Endothelial cell of umbilical vein (primary cell): ENCODE measurements at regions of chr15 and their contacts with region 1.

Region 1: GRCh38 chr15:45611305-45611704 is 23.5 kb upstream of the SQOR start:
- DNase-seq: peak; percentile 33
- H3K4me3 ChIP-seq: no peak overlapping the region
- H3K27ac ChIP-seq: no peak overlapping the region
- H3K4me1 ChIP-seq: peaks cover 8% of the 10 kb centered on the region
- H3K27me3 ChIP-seq: no peaks in the 10 kb centered on the region
- CTCF ChIP-seq: peak; percentile 20 to 24
- POLR2A ChIP-seq: no peak

Region 2: GRCh38 chr15:45429974-45430792 is 181.1 kb before region 1 on chr15:
- CTCF ChIA-PET with region 1: interaction called, 42 read pairs
- POLR2A ChIA-PET with region 1: no interaction called
- dilution Hi-C with region 1: no loop called
- intact Hi-C with region 1: loop called (anchors 1 kb)
- DNase-seq: peak; percentile 50
- H3K4me3 ChIP-seq: peak overlapping the region in 2 of 3 experiments; percentile 32 to 55
- H3K27ac ChIP-seq: no peak overlapping the region
- H3K4me1 ChIP-seq: peaks cover 5% of the 10 kb centered on the region
- H3K27me3 ChIP-seq: peaks cover 2 to 14% of the 10 kb centered on the region in 2 experiments
- CTCF ChIP-seq: peak; percentile 100
- POLR2A ChIP-seq: no peak

Region 3: DNA sequence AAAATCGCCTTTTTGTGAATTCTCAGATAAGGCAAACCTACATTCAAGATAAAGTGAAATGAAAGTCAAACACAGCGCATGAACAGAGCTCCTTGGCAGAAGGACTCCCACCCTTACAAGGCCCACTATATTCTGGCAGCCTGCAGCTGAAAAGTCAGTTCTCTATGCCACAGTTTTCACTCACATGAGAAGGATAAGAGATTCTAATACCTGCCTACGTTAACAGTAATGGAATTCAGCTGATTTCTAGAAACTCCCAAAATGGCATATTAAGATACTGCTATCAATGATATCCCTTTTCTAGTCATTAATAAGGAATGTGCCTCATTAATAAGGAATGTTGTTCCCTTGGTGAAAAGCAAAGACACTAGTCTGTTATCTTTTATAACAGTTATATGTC is 115.7 kb before region 1 on chr15:
- CTCF ChIA-PET with region 1: interaction called, 15 read pairs
- POLR2A ChIA-PET with region 1: no interaction called
- dilution Hi-C with region 1: no loop called
- intact Hi-C with region 1: no loop called
- DNase-seq: no peak
- H3K4me3 ChIP-seq: no peak overlapping the region
- H3K27ac ChIP-seq: no peak overlapping the region
- H3K4me1 ChIP-seq: peaks cover 11% of the 10 kb centered on the region
- H3K27me3 ChIP-seq: no peaks in the 10 kb centered on the region
- CTCF ChIP-seq: no peak
- POLR2A ChIP-seq: no peak

Region 4: DNA sequence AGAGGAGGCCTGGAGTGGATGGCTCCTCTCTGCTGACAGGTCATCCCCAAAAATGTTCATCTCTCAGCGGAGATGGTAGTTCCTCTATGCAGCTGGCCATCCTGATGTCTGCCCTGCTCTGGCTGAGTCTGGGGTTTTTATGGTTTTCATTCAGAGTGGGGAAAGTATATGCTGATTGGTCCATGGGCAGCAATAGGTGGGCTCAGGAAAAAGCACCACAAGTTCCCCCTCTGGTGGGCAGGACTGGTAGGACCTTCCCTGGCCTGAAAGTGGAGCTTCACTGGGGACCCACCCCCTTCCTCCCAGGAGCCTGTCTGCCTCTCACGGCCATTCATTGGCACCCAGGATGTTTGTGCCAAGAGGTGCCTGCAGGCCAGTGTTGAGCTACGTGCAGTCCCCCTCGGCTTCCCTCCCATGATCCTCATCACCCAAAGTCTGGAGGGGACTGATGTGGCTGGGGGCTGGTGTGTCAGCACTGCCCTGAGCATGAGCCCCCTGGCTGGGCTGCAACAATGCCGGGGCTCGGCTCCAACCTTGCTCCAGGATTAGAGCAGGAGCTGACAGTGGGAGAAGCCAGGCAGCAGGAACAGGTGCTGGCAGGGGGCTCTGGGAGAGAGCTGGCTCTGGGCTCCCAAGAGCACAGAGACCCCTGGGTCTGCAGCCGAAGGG is 37.2 kb before region 1 on chr15:
- CTCF ChIA-PET with region 1: interaction called, 13 read pairs
- POLR2A ChIA-PET with region 1: no interaction called
- dilution Hi-C with region 1: no loop called
- intact Hi-C with region 1: no loop called
- DNase-seq: no peak
- H3K4me3 ChIP-seq: no peak overlapping the region
- H3K27ac ChIP-seq: no peak overlapping the region
- H3K4me1 ChIP-seq: no peaks in the 10 kb centered on the region
- H3K27me3 ChIP-seq: peaks cover 2 to 10% of the 10 kb centered on the region in 2 experiments
- CTCF ChIP-seq: peak; percentile 21 to 35
- POLR2A ChIP-seq: no peak

Region 5: GRCh38 chr15:45594319-45594718 is 17.0 kb before region 1 on chr15:
- CTCF ChIA-PET with region 1: interaction called, 47 read pairs
- POLR2A ChIA-PET with region 1: no interaction called
- dilution Hi-C with region 1: no loop called
- intact Hi-C with region 1: no loop called
- DNase-seq: no peak
- H3K4me3 ChIP-seq: no peak overlapping the region
- H3K27ac ChIP-seq: no peak overlapping the region
- H3K4me1 ChIP-seq: peaks cover 12% of the 10 kb centered on the region
- H3K27me3 ChIP-seq: no peaks in the 10 kb centered on the region
- CTCF ChIP-seq: no peak
- POLR2A ChIP-seq: no peak

Region 6: GRCh38 chr15:45660231-45660979 is 49.1 kb after region 1 on chr15:
- CTCF ChIA-PET with region 1: no interaction called
- POLR2A ChIA-PET with region 1: no interaction called
- dilution Hi-C with region 1: no loop called
- intact Hi-C with region 1: no loop called
- DNase-seq: no peak
- H3K4me3 ChIP-seq: no peak overlapping the region
- H3K27ac ChIP-seq: no peak overlapping the region
- H3K4me1 ChIP-seq: no peaks in the 10 kb centered on the region
- H3K27me3 ChIP-seq: no peaks in the 10 kb centered on the region
- CTCF ChIP-seq: no peak
- POLR2A ChIP-seq: no peak